Mammary epithelial cell (primary cell): ENCODE measurements at regions of chr18 and their contacts with region 1.

Region 1: GRCh38 chr18:22563098-22563707 is 145.5 kb upstream of the CTAGE1 start:
- DNase-seq: peak; percentile 85
- H3K4me3 ChIP-seq: peak overlapping the region; percentile 12 to 23 (median 19)
- H3K27ac ChIP-seq: peak overlapping the region; percentile 41
- H3K4me1 ChIP-seq: peaks cover 31% of the 10 kb centered on the region
- H3K27me3 ChIP-seq: no peaks in the 10 kb centered on the region
- CTCF ChIP-seq: peak; percentile 89

Region 2: DNA sequence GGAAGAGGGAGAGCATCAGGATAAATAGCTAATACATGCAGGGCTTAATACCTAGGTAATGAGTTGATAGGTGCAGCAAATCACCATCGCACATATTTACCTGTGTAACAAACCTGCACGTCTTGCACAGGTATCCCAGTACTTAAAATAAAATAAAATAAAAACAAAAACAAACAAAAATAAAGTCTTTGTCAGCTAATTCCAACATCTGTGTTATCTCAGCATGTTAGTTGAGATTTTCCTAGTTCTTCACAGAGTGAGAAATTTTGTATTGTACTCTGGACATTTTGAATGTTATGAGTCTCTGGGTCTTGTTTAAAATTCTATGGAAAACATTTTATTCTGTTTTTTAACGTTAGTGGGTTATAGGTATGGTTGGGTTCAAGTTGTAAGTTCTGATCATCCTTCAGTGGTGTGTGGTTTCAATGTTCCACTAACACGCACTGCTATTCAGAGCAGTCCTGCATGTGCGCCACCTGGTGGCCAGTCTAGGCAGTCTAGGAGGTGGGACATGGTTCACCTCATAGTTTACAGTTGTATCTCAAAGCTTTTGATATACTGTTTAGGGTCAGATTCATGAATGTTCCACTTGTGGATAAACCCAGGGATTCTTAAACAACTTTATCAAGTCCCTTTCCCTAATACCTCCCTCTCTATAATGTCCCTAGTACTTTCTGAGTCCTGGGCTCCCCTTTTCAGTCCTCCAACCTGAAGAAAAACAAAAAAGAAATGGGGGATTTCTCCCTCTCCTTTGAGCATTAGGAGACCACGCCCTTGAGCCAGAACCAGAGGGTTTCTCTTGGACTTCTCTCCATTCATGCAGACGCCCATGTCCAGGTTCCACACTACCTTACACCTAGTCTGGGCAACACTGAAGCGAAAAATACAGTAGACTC is 607.2 kb before region 1 on chr18:
- CTCF ChIA-PET with region 1: no interaction called
- dilution Hi-C with region 1: no loop called
- in situ Hi-C with region 1: no loop called
- intact Hi-C with region 1: loop called (anchors 5 kb)
- DNase-seq: peak; percentile 41
- H3K4me3 ChIP-seq: no peak overlapping the region
- H3K27ac ChIP-seq: no peak overlapping the region
- H3K4me1 ChIP-seq: no peaks in the 10 kb centered on the region
- H3K27me3 ChIP-seq: no peaks in the 10 kb centered on the region
- CTCF ChIP-seq: peak; percentile 94 to 97

Region 3: GRCh38 chr18:22174341-22175145 is 388.7 kb before region 1 on chr18:
- CTCF ChIA-PET with region 1: interaction called, 7 read pairs
- dilution Hi-C with region 1: no loop called
- in situ Hi-C with region 1: loop called (anchors 10 kb)
- intact Hi-C with region 1: loop called (anchors 1 kb)
- DNase-seq: no peak
- H3K4me3 ChIP-seq: no peak overlapping the region
- H3K27ac ChIP-seq: no peak overlapping the region
- H3K4me1 ChIP-seq: peaks cover 19% of the 10 kb centered on the region
- H3K27me3 ChIP-seq: no peaks in the 10 kb centered on the region
- CTCF ChIP-seq: peak in 1 of 2 donors; percentile 22

Region 4: GRCh38 chr18:22342625-22343024 is 220.6 kb before region 1 on chr18:
- CTCF ChIA-PET with region 1: no interaction called
- dilution Hi-C with region 1: no loop called
- in situ Hi-C with region 1: no loop called
- intact Hi-C with region 1: loop called (anchors 5 kb)
- DNase-seq: peak; percentile 93
- H3K4me3 ChIP-seq: no peak overlapping the region
- H3K27ac ChIP-seq: no peak overlapping the region
- H3K4me1 ChIP-seq: peaks cover 16% of the 10 kb centered on the region
- H3K27me3 ChIP-seq: peaks cover 3% of the 10 kb centered on the region
- CTCF ChIP-seq: no peak

Region 5: GRCh38 chr18:22465859-22466457 is 97.2 kb before region 1 on chr18:
- CTCF ChIA-PET with region 1: no interaction called
- dilution Hi-C with region 1: loop called (anchors 5 kb)
- in situ Hi-C with region 1: loop called in 1 of 2 experiments (anchors 10 kb)
- intact Hi-C with region 1: loop called (anchors 5 kb)
- DNase-seq: peak; percentile 98
- H3K4me3 ChIP-seq: no peak overlapping the region
- H3K27ac ChIP-seq: peak overlapping the region; percentile 99
- H3K4me1 ChIP-seq: peaks cover 22% of the 10 kb centered on the region
- H3K27me3 ChIP-seq: no peaks in the 10 kb centered on the region
- CTCF ChIP-seq: no peak